ENCODE measurements at regions of chr15 and their contacts with region 1.

Region 1: GRCh38 chr15:71443538-71443937 is 328.3 kb downstream of the THSD4 start:
- DNase-seq: peak; percentile 70
- ATAC-seq: no peak
- H3K4me3 Mint-ChIP-seq: no peak overlapping the region
- H3K27ac Mint-ChIP-seq: no peak overlapping the region
- H3K4me1 Mint-ChIP-seq: no peaks in the 10 kb centered on the region
- H3K27me3 Mint-ChIP-seq: peaks cover 5% of the 10 kb centered on the region

Region 2: DNA sequence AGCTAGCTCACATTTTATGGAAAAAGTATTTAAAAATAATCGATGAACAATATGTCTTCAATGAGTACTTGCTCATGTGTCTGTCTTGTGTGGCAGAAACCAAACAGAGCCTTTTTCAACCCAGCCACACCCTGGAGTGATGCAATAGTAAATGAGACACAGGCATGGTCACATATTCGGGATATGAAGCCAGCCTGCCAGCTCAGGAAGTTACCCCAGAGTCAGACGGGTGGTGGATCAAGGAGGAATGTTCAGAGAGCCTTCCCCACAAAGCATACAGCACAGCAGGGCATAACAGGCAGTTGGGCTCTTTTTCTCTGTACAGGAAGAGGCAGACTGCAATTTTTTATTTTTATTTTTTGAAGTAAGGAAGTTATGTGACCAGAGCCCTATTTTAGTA is 616.9 kb before region 1 on chr15:
- CTCF ChIA-PET with region 1: interaction called, 3 read pairs
- POLR2A ChIA-PET with region 1: no interaction called
- intact Hi-C with region 1: loop called (anchors 1 to 10 kb)
- DNase-seq: no peak
- ATAC-seq: no peak
- H3K4me3 Mint-ChIP-seq: no peak overlapping the region
- H3K27ac Mint-ChIP-seq: no peak overlapping the region
- H3K4me1 Mint-ChIP-seq: no peaks in the 10 kb centered on the region
- H3K27me3 Mint-ChIP-seq: peaks cover 10% of the 10 kb centered on the region

Region 3: GRCh38 chr15:70974004-70974832 is 469.3 kb before region 1 on chr15:
- CTCF ChIA-PET with region 1: interaction called, 4 read pairs
- POLR2A ChIA-PET with region 1: no interaction called
- intact Hi-C with region 1: loop called (anchors 1 to 5 kb)
- DNase-seq: no peak
- ATAC-seq: no peak
- H3K4me3 Mint-ChIP-seq: no peak overlapping the region
- H3K27ac Mint-ChIP-seq: no peak overlapping the region
- H3K4me1 Mint-ChIP-seq: no peaks in the 10 kb centered on the region
- H3K27me3 Mint-ChIP-seq: peaks cover 3% of the 10 kb centered on the region

Region 4: DNA sequence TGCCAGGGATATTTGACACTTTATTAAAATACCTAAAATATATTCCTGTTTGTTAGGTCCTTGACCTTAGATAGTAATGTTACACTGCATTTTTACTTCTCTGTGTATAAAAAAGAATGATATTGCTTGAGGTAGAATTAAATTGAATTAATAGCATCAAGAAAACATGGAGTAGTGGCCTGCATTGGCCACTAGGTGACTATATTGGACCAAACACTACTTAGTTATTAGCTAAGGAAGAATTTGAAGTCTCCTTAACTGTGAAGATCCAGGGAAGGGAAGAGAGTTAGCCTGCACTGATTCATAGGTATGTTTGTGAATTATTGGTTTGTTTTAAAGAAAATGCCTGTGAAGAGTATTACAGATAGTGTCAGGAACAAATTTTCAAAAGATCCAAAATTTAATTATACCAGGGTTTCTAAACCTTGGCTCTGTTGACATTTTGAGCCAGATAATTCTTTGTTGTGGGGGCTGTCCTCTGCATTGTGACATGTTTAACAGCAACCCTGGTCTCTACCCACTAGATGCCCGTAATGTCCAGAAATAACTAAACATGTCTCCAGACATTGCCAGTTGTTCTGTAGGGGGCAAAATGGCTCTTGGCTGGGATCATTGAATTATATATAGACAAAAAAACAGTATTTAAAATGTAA is 431.9 kb before region 1 on chr15:
- CTCF ChIA-PET with region 1: interaction called, 5 read pairs
- POLR2A ChIA-PET with region 1: no interaction called
- intact Hi-C with region 1: loop called (anchors 1 to 2 kb)
- DNase-seq: no peak
- ATAC-seq: no peak
- H3K4me3 Mint-ChIP-seq: no peak overlapping the region
- H3K27ac Mint-ChIP-seq: no peak overlapping the region
- H3K4me1 Mint-ChIP-seq: no peaks in the 10 kb centered on the region
- H3K27me3 Mint-ChIP-seq: peaks cover 23% of the 10 kb centered on the region

Region 5: DNA sequence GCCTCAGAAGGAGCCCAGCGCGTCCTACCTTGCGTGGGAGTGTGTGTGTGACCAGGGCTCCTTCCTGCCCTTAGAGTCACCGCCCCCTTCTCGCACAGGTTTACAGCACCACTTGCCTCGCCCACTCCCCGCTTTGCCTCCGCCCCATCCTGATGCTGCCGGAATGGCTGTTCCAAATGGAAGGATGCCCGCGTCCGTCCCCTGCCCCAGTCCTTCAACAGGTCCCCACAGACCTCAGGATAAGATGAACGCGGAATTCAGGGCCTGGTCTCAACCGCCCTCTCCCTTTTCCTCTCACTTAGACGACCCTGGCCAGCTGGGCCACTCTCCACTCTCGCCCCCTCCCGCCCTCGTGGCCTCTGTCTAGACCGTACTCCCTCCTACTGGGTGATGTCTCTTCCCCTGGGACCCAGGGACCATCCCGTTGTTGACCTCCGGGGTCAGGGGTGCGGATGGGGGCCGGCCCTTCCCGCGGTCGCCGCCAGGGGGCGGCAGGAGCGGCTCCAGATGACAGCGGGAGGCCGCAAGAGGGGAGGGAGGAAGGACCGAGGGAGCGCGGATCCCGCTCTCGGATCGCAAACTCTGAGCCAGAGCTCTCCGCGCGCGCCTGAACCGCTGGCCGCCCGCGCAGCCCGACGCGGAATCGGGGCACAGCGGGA is 328.5 kb before region 1 on chr15 and contains the start of gene THSD4:
- CTCF ChIA-PET with region 1: interaction called, 5 read pairs
- POLR2A ChIA-PET with region 1: no interaction called
- intact Hi-C with region 1: loop called (anchors 1 kb)
- DNase-seq: peak; percentile 83
- ATAC-seq: peak; percentile 93
- H3K4me3 Mint-ChIP-seq: peak within 1 kb of the TSS; percentile 55
- H3K27ac Mint-ChIP-seq: no peak within 1 kb of the TSS
- H3K4me1 Mint-ChIP-seq: peaks cover 11% of the 10 kb centered on the region
- H3K27me3 Mint-ChIP-seq: peaks cover 45% of the 10 kb centered on the region
- total RNA-seq, gene THSD4: not detected

Region 6: DNA sequence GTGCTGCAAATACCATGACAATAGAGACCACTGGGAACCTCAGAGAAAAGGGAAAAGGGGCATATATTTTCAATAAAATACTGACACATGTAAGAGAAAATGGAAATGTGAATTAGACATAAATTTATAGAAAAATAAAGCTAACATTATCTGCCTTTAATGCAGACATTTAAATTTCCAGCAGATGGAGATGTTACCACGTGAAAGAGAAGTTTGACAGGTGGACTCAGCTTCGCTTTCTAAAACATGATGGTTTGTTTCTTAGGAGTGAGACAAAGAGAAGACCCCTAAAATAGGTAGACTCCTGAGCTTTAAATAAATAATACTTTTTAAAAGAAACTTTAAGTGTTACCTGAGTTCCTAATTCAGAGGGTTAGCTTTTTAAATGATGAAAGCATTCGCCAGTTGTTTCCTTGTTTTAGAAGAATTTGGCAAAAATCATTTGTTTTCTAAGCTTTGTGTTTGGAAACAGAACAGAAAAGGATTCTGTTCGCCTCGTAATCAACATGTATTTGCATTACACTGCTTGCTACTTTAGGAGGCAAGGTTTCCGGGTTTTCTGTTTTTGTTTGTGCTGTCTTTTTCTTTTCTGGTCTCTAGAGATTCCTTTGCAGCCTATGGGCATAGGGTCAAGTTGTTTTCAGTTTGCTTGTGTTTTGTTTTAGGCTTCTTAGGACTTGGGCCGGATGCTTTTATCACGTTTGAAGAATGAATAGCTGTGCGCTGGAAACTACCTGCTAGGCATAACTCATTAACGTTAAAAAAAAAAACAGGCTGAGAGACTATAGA is 56.9 kb before region 1 on chr15:
- CTCF ChIA-PET with region 1: interaction called, 18 read pairs
- POLR2A ChIA-PET with region 1: no interaction called
- intact Hi-C with region 1: loop called in 1 of 2 experiments (anchors 2 kb)
- DNase-seq: no peak
- ATAC-seq: no peak
- H3K4me3 Mint-ChIP-seq: no peak overlapping the region
- H3K27ac Mint-ChIP-seq: no peak overlapping the region
- H3K4me1 Mint-ChIP-seq: peaks cover 4% of the 10 kb centered on the region
- H3K27me3 Mint-ChIP-seq: peaks cover 11% of the 10 kb centered on the region

Measured in activated CD4-positive, alpha-beta T cell treated with anti-CD3 and anti-CD28 coated beads for 36 hours (primary cell).